Cardiac septum (tissue), 1 donor: ENCODE measurements at regions of chr7 and their contacts with region 1.

Region 1: GRCh38 chr7:80428161-80429054 is 83.5 kb downstream of the GNAT3 start:
- DNase-seq: no peak

Region 2: GRCh38 chr7:80511964-80512363 is 83.6 kb after region 1 on chr7 and contains the start of gene GNAT3:
- intact Hi-C with region 1: loop called (anchors 5 kb)
- DNase-seq: no peak
- total RNA-seq, gene GNAT3: not detected

Region 3: GRCh38 chr7:80659120-80660055 is 231.0 kb after region 1 on chr7:
- intact Hi-C with region 1: loop called (anchors 5 kb)
- DNase-seq: no peak

Region 4: DNA sequence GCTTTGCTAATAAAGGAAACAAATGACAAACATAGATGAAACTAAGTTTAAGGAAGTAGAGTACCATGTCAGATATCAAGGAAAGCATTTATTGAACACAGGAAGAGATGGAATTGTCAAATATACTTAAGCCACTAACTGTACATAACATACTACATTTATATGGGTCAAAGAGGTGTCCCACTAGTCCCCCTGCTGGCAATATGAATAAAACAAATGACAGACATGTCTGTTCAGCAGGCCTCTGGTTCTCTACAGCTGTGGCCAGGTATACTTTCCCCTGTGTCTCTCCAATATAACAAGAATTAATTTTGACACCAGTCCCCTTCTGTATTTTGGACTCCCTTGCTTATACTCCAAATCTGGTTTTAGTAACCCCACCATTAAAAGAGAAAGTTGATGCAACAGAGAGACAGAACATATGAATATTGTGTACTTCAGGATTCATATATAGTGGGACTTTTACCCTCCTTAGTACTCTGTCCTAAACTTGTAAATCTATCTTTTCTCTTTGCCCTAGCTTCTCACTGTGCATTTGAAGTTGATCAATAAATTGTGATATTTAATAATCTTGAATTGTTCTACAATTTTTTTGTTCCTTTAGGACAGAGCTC is 253.0 kb after region 1 on chr7:
- intact Hi-C with region 1: loop called (anchors 5 kb)
- DNase-seq: no peak